ENCODE measurements at regions of chr6 and their contacts with region 1.

Region 1: DNA sequence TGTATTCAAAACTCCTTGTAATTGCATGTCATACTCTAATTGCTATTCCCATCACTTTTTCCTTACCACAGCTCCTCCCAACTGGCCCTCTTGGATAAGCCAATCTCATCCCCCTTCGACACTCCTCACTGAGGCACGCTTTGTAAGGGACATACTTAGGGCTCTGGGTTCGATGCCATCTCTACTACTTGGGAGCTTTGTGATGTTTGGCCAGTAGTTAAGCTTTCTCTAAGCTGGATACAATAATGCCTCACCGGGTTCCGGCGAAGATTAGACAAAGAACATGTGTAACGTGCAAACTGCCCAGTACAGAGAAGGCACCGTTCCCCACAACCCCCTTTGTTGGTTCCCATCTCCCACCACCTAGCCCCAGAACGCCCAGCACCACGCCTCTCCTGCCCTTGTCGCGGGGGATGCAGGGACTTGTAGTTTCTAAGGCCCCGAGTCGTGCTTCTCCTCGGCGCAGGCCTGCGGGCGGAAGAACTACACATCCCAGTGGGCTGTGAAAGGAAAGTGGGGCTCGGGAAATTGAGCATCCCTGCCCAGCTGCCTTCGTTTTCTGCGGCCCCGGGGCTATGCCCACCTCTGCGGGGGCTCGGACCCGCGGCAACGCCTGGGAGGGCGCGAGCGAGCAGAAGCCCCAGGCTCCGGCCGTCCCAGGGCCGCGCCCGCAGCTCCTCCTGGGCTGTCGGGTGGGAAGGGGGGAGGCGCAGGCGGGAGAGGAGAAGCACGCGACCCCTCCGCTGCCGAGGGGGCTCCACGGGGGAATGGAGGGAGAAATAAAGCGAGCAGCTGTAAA is 1.1 kb upstream of the ZDHHC14 start:
- DNase-seq: peak; percentile 84
- H3K4me3 ChIP-seq: peak overlapping the region; percentile 91 to 96 (median 92)
- H3K27ac ChIP-seq: peak overlapping the region; percentile 41
- H3K4me1 ChIP-seq: peaks cover 8% of the 10 kb centered on the region
- H3K27me3 ChIP-seq: no peaks in the 10 kb centered on the region
- CTCF ChIP-seq: no peak

Region 2: GRCh38 chr6:157597446-157598312 is 217.8 kb after region 1 on chr6:
- CTCF ChIA-PET with region 1: interaction called, 3 read pairs
- dilution Hi-C with region 1: no loop called
- in situ Hi-C with region 1: no loop called
- intact Hi-C with region 1: loop called (anchors 1 kb)
- DNase-seq: peak; percentile 24
- H3K4me3 ChIP-seq: no peak overlapping the region
- H3K27ac ChIP-seq: no peak overlapping the region
- H3K4me1 ChIP-seq: no peaks in the 10 kb centered on the region
- H3K27me3 ChIP-seq: no peaks in the 10 kb centered on the region
- CTCF ChIP-seq: peak; percentile 29 to 66

Region 3: DNA sequence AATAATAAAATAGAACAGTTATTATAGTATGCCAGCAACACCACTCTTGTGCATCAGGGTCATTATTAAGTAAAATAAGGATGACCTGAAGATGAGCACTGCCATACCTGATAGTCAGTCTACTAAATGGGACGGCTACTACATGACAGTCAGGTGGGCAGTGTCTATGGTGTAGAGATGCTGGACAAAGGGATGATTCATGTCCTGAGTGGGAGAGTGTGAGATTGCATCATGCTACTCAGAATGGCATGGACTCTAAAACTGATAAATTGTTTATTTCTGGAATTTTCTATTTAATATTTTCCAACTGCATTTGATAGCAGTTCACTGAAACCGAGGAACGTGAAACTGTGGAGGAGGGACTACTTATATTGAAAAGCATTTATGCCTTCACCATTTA is 482.0 kb after region 1 on chr6:
- CTCF ChIA-PET with region 1: no interaction called
- dilution Hi-C with region 1: loop called (anchors 5 kb)
- in situ Hi-C with region 1: no loop called
- intact Hi-C with region 1: no loop called
- DNase-seq: peak; percentile 58
- H3K4me3 ChIP-seq: no peak overlapping the region
- H3K27ac ChIP-seq: no peak overlapping the region
- H3K4me1 ChIP-seq: peaks cover 14% of the 10 kb centered on the region
- H3K27me3 ChIP-seq: no peaks in the 10 kb centered on the region
- CTCF ChIP-seq: no peak